ENCODE measurements at regions of chr7 and their contacts with region 1.

Region 1: DNA sequence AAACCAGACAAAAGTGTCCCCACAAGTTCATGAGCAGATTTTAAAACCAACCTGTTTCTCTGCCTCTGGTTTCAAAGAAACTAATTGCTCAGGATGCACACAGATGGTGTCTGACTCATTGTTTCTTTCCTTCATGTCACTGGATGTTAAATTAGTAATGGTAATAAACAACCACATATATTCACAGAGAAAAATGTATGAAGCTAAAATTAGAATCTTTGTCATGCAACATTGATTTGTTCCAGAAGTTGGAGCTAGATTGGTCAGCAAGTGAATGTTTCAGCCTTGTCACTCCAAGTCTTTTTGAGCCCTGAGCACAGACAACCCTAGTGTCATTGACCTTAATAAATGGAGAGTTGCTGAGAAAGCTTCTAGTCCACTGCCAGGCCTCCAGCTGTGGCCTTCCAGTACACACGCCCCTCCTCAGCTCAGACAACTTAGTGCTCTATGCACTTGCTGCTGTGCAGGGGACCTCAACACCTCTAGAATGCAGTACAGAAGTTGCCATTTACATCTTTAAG is 175.9 kb downstream of the CCDC71L start:
- DNase-seq: peak; percentile 55
- H3K4me3 Mint-ChIP-seq: peak overlapping the region; percentile 11
- H3K27ac Mint-ChIP-seq: peak overlapping the region; percentile 82
- H3K4me1 Mint-ChIP-seq: peaks cover 43% of the 10 kb centered on the region
- H3K27me3 Mint-ChIP-seq: no peaks in the 10 kb centered on the region

Region 2: DNA sequence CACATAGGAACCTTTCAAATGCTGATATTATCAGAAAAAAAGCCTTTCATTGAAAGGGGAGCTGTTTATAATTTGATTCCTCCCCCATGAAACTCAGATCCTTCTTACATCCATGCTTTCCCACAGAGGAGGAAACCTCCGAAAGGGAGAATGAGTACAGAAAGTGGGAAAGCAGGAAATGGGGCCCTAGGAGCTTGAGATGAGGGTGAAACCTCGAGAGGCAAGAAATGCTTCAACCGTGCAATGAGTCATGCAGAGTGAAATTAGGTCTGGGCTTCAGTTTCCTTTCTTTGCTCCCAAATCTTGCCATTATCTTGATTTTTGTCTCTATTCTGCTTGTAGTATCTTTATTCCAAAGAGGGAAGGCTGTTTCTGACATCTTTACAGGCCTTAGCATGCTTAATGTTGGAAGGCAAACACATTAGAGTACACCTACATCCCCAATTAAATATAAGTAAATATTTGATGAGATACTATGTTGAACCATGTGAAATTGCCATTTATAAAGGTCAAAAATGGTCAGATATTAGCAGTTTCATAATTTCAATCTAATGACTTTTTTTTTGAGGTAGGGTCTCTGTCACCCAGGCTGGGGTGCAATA is 279.4 kb before region 1 on chr7:
- intact Hi-C with region 1: no loop called
- DNase-seq: no peak
- H3K4me3 Mint-ChIP-seq: no peak overlapping the region
- H3K27ac Mint-ChIP-seq: no peak overlapping the region
- H3K4me1 Mint-ChIP-seq: peaks cover 4% of the 10 kb centered on the region
- H3K27me3 Mint-ChIP-seq: peaks cover 22% of the 10 kb centered on the region

Region 3: GRCh38 chr7:106504645-106505044 is 19.6 kb after region 1 on chr7:
- intact Hi-C with region 1: loop called (anchors 2 kb)
- DNase-seq: no peak
- H3K4me3 Mint-ChIP-seq: peak overlapping the region; percentile 1
- H3K27ac Mint-ChIP-seq: peak overlapping the region; percentile 80
- H3K4me1 Mint-ChIP-seq: peaks cover 14% of the 10 kb centered on the region
- H3K27me3 Mint-ChIP-seq: no peaks in the 10 kb centered on the region

Region 4: GRCh38 chr7:106717955-106718871 is 233.1 kb after region 1 on chr7:
- intact Hi-C with region 1: loop called (anchors 5 kb)
- DNase-seq: peak; percentile 85
- H3K4me3 Mint-ChIP-seq: no peak overlapping the region
- H3K27ac Mint-ChIP-seq: no peak overlapping the region
- H3K4me1 Mint-ChIP-seq: peaks cover 22% of the 10 kb centered on the region
- H3K27me3 Mint-ChIP-seq: no peaks in the 10 kb centered on the region

Region 5: DNA sequence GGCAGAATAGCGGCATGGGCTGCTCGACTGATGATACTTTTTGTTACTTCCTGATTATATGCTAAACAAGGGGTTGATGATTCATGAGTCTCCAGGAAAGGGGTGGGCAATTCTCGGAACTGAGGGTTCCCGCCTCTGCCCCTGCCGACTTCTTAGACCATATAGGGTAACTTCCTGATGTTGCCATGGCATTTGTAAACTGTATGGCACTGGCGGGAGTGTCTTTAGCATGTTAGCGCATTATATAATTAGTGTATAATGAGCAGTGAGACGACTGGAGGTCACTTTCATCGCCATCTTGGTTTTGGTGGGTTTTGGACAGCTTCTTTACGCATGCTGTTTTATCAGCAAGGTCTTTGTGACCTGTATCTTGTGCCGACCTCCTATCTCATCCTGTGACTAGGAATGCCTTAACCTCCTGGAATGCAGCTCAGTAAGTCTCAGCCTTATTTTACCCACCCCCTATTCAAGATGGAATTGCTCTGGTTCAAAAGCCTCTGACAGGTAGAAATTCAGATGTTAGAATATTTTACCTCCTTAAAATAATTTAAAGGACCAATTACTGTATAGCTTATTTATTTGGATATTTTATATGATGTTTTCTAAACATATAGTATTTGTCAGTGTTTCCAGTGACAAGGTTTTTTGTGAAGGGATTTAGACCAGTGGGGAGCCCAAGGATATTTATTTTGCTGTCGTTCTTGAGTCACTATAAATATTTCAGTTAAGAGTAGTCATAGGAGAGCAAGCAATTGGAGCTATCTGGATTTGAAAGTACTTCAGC is 289.9 kb after region 1 on chr7:
- intact Hi-C with region 1: loop called (anchors 5 kb)
- DNase-seq: no peak
- H3K4me3 Mint-ChIP-seq: no peak overlapping the region
- H3K27ac Mint-ChIP-seq: peak overlapping the region; percentile 45
- H3K4me1 Mint-ChIP-seq: peaks cover 28% of the 10 kb centered on the region
- H3K27me3 Mint-ChIP-seq: no peaks in the 10 kb centered on the region